Mammary epithelial cell (primary cell): ENCODE measurements at regions of chr19 and their contacts with region 1.

Region 1: GRCh38 chr19:45730389-45731288 is at the start of gene FBXO46:
- DNase-seq: peak; percentile 99
- H3K4me3 ChIP-seq: peak within 1 kb of the TSS; percentile 72 to 86 (median 79)
- H3K27ac ChIP-seq: peak within 1 kb of the TSS; percentile 64
- H3K4me1 ChIP-seq: peaks cover 4% of the 10 kb centered on the region
- H3K27me3 ChIP-seq: no peaks in the 10 kb centered on the region
- CTCF ChIP-seq: peak in 1 of 2 donors; percentile 32
- total RNA-seq, gene FBXO46: 9.5 to 19.5 TPM

Region 2: DNA sequence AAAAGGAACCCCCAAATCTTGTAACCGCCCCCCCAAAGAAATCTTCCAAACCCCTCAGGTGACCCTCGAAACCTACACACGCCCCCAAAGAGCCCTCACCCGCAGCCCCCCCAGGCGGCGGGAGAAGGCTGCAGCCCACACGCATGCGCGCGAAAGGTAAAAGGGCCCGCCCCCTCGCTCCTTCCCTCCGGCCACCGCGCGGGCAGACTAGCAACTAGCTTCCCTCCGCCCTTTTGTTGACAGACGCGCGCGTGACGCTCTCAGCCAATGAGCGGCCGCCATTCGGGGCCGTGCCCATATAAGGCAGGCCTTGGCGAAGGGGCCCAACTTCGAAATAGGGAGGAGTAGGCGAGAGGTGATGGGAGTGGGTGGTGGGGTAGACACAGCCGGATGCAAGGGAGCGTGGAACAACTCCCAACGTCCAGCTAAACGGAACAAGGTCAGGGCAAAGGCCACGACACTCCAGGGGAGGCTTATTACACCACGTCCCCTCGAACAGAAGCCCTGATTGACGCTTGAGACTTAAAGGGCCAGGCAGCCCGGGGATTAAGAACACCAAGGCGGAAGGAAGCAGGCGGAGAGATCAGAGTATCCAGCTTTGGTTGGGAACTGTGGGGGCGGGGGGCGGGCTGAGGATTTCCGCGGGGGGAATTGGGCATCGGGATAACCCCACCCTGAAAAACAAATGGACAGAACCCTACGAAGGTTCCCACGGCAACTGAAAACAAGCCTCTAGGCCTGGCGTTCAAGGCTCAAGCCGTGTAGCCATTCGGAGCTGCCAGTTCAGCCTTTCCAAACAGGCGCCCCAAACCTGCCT is 13.3 kb before region 1 on chr19:
- CTCF ChIA-PET with region 1: interaction called, 3 read pairs
- dilution Hi-C with region 1: no loop called
- in situ Hi-C with region 1: no loop called
- intact Hi-C with region 1: loop called (anchors 1 kb)
- DNase-seq: peak; percentile 97
- H3K4me3 ChIP-seq: peak overlapping the region; percentile 64 to 91 (median 65)
- H3K27ac ChIP-seq: peak overlapping the region; percentile 87
- H3K4me1 ChIP-seq: peaks cover 23% of the 10 kb centered on the region
- H3K27me3 ChIP-seq: no peaks in the 10 kb centered on the region
- CTCF ChIP-seq: peak; percentile 5 to 29

Region 3: DNA sequence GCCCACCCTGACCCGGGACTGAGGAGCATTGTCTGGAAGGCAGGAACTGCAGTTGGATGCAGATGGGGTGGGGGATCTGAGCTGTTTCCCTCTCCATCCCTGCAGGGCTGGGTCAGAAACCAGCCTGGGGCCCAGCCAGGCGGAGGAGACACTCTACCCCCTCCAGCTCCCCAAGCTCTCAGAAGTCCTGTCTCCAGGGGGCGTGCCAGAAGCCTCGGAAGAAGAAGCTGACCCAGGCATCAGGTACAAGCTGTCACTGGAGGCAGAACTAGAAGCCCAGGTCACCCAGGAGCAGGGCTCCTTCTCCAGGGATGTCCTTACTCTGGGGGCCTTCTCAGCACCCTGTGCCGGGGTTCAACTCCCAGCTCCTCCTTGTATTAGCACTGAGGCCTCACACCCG is 22.9 kb after region 1 on chr19:
- CTCF ChIA-PET with region 1: interaction called, 9 read pairs
- dilution Hi-C with region 1: no loop called
- in situ Hi-C with region 1: no loop called
- intact Hi-C with region 1: loop called (anchors 2 kb)
- DNase-seq: no peak
- H3K4me3 ChIP-seq: no peak overlapping the region
- H3K27ac ChIP-seq: no peak overlapping the region
- H3K4me1 ChIP-seq: peaks cover 5% of the 10 kb centered on the region
- H3K27me3 ChIP-seq: no peaks in the 10 kb centered on the region
- CTCF ChIP-seq: no peak

Region 4: GRCh38 chr19:45785781-45786532 is 55.3 kb after region 1 on chr19:
- CTCF ChIA-PET with region 1: no interaction called
- dilution Hi-C with region 1: loop called (anchors 5 kb)
- in situ Hi-C with region 1: no loop called
- intact Hi-C with region 1: no loop called
- DNase-seq: no peak
- H3K4me3 ChIP-seq: no peak overlapping the region
- H3K27ac ChIP-seq: no peak overlapping the region
- H3K4me1 ChIP-seq: peaks cover 31% of the 10 kb centered on the region
- H3K27me3 ChIP-seq: no peaks in the 10 kb centered on the region
- CTCF ChIP-seq: no peak

Region 5: DNA sequence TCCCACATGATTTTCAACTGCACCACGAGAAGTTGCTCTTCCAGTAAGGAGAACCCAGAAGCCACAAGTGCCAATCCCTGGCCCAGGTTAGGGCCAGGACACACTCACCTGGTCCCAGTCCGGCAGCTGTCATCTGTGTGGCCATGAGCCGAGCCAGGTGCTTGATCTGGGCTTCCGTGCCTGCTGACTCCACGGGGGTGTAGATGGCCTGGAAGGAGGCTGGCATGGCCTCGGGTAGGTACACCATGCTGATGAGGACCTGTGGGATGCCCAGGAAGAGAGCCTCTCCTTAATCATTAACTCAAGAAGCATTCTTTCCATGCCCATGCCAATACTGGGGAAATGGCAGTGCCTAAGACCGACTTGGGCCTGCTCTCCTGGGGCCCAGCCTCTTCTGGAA is 104.3 kb after region 1 on chr19:
- CTCF ChIA-PET with region 1: no interaction called
- dilution Hi-C with region 1: loop called (anchors 5 kb)
- in situ Hi-C with region 1: no loop called
- intact Hi-C with region 1: no loop called
- DNase-seq: no peak
- H3K4me3 ChIP-seq: no peak overlapping the region
- H3K27ac ChIP-seq: no peak overlapping the region
- H3K4me1 ChIP-seq: no peaks in the 10 kb centered on the region
- H3K27me3 ChIP-seq: no peaks in the 10 kb centered on the region
- CTCF ChIP-seq: no peak